ENCODE measurements at regions of chr2 and their contacts with region 1.

Region 1: DNA sequence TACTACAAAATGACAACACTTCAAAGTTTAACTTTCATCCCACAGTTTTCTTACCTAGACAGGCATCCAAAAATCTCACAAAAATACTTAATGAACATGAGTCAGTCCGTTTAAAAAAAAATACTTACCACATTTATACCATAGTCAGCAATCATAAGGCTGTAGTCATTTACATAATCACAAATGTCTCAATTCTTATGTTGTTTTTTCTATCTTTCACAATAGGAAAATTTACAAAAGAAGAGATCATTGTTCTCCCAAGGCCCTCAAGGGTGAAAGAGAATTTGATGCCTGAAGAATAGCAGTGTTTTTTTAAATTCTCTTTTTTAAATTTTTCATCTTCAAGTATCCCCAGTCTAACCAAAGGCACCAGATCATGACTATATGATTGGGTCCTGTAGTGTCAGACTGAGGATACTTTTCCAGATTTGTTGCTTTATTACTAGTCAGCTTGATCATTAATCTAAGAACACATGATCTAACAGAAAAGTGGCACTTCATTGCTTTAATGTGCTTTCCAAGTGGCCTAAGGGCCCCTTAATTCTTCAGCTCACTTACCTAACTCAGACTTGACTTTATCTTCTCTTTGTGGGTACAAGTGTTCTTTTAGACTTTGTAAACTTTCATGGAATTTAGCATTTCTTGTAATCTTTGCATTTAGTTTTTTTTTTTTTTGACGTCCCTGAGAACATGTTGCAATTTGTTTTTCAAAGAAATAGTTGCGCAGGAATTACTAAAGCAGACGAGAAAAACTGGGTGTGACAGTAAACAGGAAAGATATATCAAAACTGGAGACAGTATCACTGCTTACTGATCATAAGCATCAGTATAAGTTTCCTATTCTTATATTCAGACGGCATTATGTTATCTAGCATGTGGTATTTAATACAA is 4.8 kb downstream of the SCYGR5 start:
- DNase-seq: no peak
- ATAC-seq: no peak

Region 2: DNA sequence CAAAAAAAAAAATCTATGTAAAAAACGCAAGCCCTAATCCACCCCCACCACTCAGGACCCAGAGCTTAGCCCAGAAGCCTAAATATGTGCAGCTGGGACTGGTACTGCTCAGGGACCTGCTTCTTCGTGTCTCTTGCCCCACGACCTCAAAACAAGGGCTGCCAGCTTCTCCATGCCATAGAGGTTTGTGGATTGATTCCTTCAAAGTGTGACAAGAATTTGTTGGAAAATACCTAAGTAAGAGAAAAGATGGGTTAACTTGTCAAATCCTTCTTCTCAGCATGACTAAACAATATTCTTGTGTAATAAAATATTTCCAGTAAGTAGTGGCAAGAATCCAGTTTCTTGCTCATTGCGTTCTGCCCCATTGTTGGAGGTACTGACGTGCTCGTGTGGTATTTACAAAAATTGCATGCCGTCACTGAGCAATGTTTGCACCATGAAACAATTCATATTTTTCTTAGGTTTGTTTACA is 282.8 kb before region 1 on chr2:
- intact Hi-C with region 1: no loop called
- DNase-seq: no peak
- ATAC-seq: no peak

Region 3: DNA sequence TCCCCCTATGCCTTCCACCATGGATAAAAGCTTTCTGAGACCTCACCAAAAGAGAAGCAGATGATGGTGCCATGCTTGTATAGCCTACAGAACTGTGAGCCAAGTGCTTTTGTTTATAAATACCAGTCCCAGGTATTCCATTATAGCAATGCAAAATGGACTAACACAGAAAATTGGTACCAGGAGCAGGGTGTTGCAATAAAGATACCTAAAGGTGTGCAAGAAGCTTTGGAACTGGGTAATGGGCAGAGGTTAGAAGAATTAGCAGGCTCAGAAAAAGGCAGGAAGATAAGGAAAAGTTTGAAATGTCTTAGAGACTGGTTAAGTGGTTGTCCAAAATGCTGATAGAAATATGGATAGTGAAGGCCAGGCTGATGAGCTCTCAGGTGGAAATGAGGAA is 89.0 kb before region 1 on chr2:
- intact Hi-C with region 1: no loop called
- DNase-seq: no peak
- ATAC-seq: no peak

Region 4: GRCh38 chr2:227696787-227697679 is 25.6 kb after region 1 on chr2:
- intact Hi-C with region 1: no loop called
- DNase-seq: no peak
- ATAC-seq: no peak

Region 5: DNA sequence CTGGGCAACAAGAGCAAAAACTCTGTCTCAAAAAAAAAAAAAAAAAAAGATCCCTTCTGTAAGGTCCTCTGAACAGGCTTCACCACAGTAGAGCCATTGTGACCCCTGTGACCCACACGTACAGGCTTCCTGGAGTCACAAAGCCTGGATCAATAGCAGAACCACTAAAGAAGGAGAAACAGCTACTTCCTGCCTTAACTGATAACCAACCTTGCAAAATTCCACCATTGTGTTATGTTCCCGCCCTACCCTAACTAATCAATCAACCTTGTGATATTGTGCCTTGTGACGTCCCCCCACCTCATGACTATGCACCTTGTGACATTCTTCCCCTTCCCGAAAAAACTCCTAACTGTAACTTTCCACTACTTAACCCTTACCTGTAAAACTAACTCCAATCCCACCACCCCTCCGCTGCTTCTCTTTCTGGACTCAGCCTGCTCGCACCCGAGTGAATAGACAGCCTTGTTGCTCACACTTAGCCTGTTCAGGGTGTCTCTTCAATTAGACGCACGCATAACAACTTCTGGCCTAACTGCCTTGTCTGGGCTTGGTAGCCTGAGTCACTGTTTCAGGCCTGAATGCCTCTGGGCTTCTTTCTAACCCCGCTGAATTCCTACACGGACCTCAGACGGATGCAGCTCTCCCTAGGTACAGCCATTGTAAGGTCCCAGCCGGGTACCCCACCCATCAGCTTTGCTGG is 88.1 kb after region 1 on chr2:
- intact Hi-C with region 1: loop called in 1 of 2 experiments (anchors 10 kb)
- DNase-seq: no peak
- ATAC-seq: no peak

Measured in left cardiac atrium (tissue), 4 donors.